ENCODE measurements at regions of chr19 and their contacts with region 1.

Region 1: GRCh38 chr19:7348587-7349230 is at the start of gene ARHGEF18:
- DNase-seq: peak in 8 of 9 donors; percentile 40 to 89 (median 84)
- ATAC-seq: peak; percentile 77
- H3K4me3 ChIP-seq: peak within 1 kb of the TSS; percentile 99
- H3K4me3 Mint-ChIP-seq: peak within 1 kb of the TSS; percentile 83 to 100 (median 99)
- H3K27ac ChIP-seq: peak within 1 kb of the TSS; percentile 74
- H3K27ac Mint-ChIP-seq: peak within 1 kb of the TSS; percentile 86 to 100 (median 98)
- H3K4me1 ChIP-seq: peaks cover 28 to 44% of the 10 kb centered on the region in 2 donors
- H3K4me1 Mint-ChIP-seq: peaks cover 22 to 78% (median 62%) of the 10 kb centered on the region in 7 donors
- H3K27me3 ChIP-seq: no peaks in the 10 kb centered on the region
- H3K27me3 Mint-ChIP-seq: no peaks in the 10 kb centered on the region
- total RNA-seq, gene ARHGEF18: 53.0 to 132 (median 130) TPM

Region 2: DNA sequence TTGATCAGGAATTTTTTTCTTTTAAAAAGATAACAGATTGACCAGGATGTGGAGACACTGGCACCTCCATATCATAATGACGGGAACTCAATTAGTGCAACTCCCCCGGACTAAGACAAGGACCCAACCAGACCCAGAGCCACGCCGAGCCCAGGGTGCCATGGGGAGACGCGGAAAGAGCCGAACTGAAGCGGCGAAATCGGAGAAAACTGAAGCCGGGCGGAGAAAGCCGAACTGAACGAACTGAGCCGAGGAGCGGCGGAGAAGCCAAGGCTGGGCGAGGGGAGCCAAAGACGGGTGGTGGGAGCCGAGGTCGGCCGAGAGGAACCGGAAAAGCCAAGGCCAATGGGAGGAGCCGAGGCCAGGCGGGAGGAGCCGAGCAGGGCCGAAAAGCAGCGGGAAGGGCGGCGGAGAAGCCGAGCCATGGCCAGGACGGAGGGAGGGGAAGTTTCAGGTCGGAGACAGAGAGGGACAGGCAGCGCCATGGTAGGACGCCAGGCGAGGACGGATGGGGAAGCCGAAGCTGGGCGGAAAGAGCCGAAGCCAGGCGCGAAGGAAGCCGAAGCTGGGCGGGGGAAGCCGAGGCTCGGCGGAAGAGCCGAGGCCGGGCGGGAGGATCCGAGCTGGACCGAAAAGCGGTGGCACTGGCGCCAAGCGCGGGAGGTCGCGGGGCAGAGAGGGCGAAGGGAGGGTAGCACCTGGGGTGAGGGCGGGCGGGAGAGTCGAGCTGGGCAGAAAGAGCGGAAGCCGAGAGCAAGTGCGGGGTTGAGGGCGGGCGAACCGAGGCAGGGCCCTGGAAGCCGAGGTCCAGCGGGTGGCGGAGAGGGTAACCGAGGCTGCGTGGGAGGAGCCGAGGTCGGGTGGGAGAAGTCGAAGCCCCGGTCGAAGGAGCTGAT is 249.8 kb before region 1 on chr19:
- CTCF ChIA-PET with region 1: interaction called, 3 read pairs
- POLR2A ChIA-PET with region 1: interaction called, 13 read pairs
- intact Hi-C with region 1: loop called in 1 of 2 experiments (anchors 2 kb)
- DNase-seq: peak; percentile 72 to 93 (median 90)
- ATAC-seq: peak; percentile 95
- H3K4me3 ChIP-seq: peak overlapping the region; percentile 98
- H3K4me3 Mint-ChIP-seq: peak overlapping the region; percentile 90 to 97 (median 93)
- H3K27ac ChIP-seq: peak overlapping the region; percentile 79
- H3K27ac Mint-ChIP-seq: peak overlapping the region; percentile 88 to 98 (median 94)
- H3K4me1 ChIP-seq: peaks cover 6 to 17% of the 10 kb centered on the region in 2 donors
- H3K4me1 Mint-ChIP-seq: peaks cover 11 to 41% (median 30%) of the 10 kb centered on the region in 7 donors
- H3K27me3 ChIP-seq: no peaks in the 10 kb centered on the region
- H3K27me3 Mint-ChIP-seq: peaks cover 0 to 8% (median 0%) of the 10 kb centered on the region in 5 donors

Region 3: DNA sequence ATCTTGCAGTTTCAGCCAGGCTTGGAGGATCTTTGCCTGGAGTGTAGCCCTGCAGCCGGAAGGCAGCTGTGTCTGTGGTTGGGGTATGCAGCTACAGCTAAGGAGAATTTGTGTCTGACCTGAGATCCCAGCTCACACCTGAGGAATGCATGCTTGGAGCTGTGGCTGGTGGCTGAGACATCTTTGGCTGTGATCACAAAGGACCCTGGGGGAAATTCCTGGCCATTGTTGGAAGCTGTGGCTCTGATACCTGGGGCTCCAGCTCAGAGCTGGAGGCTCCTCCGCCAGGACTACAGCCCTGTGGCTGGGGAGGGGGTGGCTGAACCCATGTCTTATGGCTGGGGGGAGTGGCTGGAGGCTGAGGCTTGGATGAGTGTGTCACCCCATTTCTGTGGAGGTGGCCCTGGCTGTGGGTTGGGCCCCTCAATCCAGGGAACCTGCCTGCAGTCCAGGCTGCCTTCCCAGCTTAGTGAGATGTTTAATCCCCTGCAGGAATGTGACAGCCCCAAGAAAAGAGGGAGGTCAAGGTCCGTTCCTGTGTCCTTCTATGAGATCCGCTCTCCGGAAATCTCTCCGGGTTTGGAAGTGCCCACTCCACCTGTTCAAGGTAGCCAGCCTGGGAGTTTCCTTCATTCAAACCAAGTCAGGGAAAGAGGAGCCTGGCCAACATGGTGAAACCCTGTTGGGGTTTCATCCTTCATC is 27.6 kb after region 1 on chr19:
- CTCF ChIA-PET with region 1: interaction called, 16 read pairs
- POLR2A ChIA-PET with region 1: interaction called, 4 read pairs
- intact Hi-C with region 1: no loop called
- DNase-seq: no peak
- ATAC-seq: no peak
- H3K4me3 ChIP-seq: no peak overlapping the region
- H3K4me3 Mint-ChIP-seq: no peak overlapping the region
- H3K27ac ChIP-seq: no peak overlapping the region
- H3K27ac Mint-ChIP-seq: peak overlapping the region in 3 of 9 donors; percentile 55 to 76 (median 69)
- H3K4me1 ChIP-seq: no peaks in the 10 kb centered on the region
- H3K4me1 Mint-ChIP-seq: peaks cover 0 to 33% (median 16%) of the 10 kb centered on the region in 7 donors
- H3K27me3 ChIP-seq: no peaks in the 10 kb centered on the region
- H3K27me3 Mint-ChIP-seq: no peaks in the 10 kb centered on the region

Region 4: GRCh38 chr19:7442423-7442822 is 93.7 kb after region 1 on chr19:
- CTCF ChIA-PET with region 1: interaction called, 3 read pairs
- POLR2A ChIA-PET with region 1: interaction called, 4 read pairs
- intact Hi-C with region 1: loop called in 1 of 2 experiments (anchors 10 kb)
- DNase-seq: no peak
- ATAC-seq: no peak
- H3K4me3 ChIP-seq: no peak overlapping the region
- H3K4me3 Mint-ChIP-seq: no peak overlapping the region
- H3K27ac ChIP-seq: no peak overlapping the region
- H3K27ac Mint-ChIP-seq: peak overlapping the region in 3 of 9 donors; percentile 18 to 81 (median 70)
- H3K4me1 ChIP-seq: no peaks in the 10 kb centered on the region
- H3K4me1 Mint-ChIP-seq: no peaks in the 10 kb centered on the region
- H3K27me3 ChIP-seq: no peaks in the 10 kb centered on the region
- H3K27me3 Mint-ChIP-seq: no peaks in the 10 kb centered on the region